Posterior vena cava (tissue), 2 donors: ENCODE measurements at regions of chr2 and their contacts with region 1.

Region 1: DNA sequence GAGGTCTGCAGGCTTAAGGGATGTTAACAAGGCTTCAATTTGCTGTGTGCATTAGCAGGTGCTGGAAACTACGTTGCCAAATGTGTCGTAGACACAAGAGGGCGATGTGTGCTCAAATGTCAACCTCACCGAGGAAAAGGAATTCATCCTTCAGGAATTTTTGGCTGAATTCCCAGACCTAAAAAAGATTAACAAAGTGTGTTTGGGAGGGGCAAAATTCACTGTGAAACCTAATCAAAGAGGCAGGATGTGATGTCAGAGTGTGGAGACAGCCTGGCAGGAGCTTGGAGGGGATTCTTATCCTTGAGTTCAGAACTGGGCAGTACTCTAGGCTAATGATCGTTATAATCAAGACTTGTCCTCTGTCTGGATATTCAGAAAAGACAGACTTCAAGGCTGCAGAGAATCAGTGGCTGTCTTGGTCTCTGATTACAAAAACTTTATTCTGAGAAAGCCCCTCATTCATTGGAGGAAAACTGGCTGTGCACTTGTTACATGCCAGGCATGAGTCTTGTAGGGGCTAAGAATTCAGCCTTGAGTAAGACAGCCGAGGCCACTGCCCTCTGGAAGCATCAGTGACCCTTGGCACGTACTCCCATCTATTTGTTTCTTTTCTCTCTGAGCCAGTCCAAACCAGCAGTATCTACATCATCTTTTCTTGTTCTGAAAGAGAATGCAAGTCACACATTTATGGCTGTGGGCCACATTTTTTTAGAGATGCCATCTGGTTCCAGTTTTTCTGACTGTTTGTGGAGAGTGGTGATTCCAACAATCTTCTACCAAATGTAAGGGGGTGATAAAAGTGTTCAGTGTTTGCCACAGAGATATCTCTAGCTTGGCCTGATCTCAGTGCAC is 18.7 kb upstream of the SCYGR1 start:
- DNase-seq: no peak

Region 2: DNA sequence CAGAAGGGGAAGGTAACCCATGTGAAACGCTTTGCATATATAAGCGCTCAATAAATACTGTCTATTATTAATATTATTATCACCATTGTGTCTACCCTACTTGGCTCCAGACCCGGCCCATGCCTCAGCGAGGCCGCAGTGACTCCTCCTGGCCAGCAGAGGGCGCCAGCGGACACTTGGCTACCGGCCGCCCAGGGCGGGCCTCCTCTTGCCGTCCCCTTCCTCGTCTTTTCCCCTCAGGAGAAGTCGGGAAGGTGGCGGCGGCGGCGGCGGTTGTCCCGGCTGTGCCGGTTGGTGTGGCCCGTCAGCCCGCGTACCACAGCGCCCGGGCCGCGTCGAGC is 65.5 kb after region 1 on chr2 and contains the start of gene AGFG1:
- intact Hi-C with region 1: loop called in 1 of 2 experiments (anchors 10 kb)
- DNase-seq: peak; percentile 96
- total RNA-seq, gene AGFG1: 82.8 to 85.5 TPM

Region 3: DNA sequence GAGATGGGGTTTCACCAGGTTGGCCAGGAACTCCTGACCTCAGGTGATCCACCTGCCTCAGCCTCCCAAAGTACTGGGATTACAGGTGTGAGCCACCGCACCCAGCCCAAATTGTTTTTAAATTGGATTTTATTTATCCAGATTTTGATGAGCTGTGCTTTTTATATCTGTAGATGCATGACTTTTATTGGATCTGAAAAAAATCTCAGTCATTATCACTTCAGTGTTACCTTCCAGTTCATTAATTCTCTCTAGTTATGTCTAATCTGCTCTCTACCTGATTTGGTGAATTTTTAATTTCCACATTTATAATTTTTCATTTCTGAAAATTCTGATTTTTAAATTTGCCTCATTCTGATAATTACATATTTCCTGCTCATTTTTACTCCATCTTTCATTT is 79.0 kb after region 1 on chr2:
- intact Hi-C with region 1: no loop called
- DNase-seq: no peak

Region 4: GRCh38 chr2:227655454-227655853 is 249.1 kb after region 1 on chr2:
- intact Hi-C with region 1: loop called in 1 of 2 experiments (anchors 10 kb)
- DNase-seq: no peak

Region 5: DNA sequence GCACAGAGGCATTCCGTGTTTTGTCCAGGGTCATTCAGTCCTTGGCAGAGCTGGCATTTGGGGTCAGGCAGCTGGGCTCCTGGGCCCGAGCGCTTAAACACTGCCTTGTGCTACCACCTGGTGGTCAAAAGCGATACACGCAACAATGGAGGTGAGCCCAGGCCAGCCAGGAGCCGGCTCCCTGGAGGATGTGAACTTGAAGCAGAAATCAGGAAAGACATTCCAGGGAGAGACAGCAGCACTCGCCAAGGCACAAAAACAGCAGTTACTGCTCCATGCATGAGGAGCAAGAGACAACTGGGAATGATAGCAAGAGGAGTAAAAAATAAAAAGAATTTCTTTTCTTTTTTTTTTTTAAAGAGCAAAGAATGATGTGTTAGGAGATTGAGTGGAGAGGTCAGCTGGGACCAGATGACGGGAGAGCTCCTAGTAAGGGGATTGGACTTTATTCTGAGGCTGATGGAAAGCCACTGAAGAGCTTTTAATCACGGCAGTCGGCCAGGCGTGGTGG is 360.0 kb after region 1 on chr2:
- intact Hi-C with region 1: loop called in 1 of 2 experiments (anchors 10 kb)
- DNase-seq: peak; percentile 92